ENCODE measurements at regions of chr19 and their contacts with region 1.

Region 1: GRCh38 chr19:43668406-43669158 is 1.4 kb downstream of the PLAUR start:
- DNase-seq: peak; percentile 82 to 98 (median 95)
- ATAC-seq: peak; percentile 90
- H3K4me3 ChIP-seq: peak overlapping the region; percentile 88
- H3K4me3 Mint-ChIP-seq: peak overlapping the region; percentile 84 to 93 (median 90)
- H3K27ac ChIP-seq: peak overlapping the region; percentile 58
- H3K27ac Mint-ChIP-seq: peak overlapping the region; percentile 71 to 91 (median 86)
- H3K4me1 ChIP-seq: peaks cover 16 to 27% of the 10 kb centered on the region in 2 donors
- H3K4me1 Mint-ChIP-seq: peaks cover 37 to 55% (median 45%) of the 10 kb centered on the region in 7 donors
- H3K27me3 ChIP-seq: no peaks in the 10 kb centered on the region
- H3K27me3 Mint-ChIP-seq: peaks cover 0 to 8% (median 0%) of the 10 kb centered on the region in 5 donors

Region 2: DNA sequence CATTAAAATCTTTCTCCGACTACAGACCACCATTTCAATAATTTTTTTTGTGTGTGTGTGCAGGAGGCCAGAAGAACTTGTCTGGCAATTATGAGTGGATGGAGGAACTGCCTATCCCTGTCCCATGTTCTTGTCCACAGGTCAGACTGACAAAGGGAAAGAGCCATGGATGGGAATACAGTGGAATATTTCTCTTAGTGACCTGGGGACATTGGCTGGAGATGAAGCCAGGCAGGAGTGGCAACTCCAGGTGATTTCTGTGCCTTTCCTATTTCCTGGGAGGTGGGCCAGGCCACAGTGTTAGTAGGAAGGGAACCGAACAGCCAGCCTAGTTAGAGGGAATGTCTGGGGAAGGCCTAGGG is 402.9 kb before region 1 on chr19:
- CTCF ChIA-PET with region 1: no interaction called
- POLR2A ChIA-PET with region 1: no interaction called
- intact Hi-C with region 1: no loop called
- DNase-seq: no peak
- ATAC-seq: no peak
- H3K4me3 ChIP-seq: no peak overlapping the region
- H3K4me3 Mint-ChIP-seq: no peak overlapping the region
- H3K27ac ChIP-seq: no peak overlapping the region
- H3K27ac Mint-ChIP-seq: no peak overlapping the region
- H3K4me1 ChIP-seq: no peaks in the 10 kb centered on the region
- H3K4me1 Mint-ChIP-seq: no peaks in the 10 kb centered on the region
- H3K27me3 ChIP-seq: no peaks in the 10 kb centered on the region
- H3K27me3 Mint-ChIP-seq: peaks cover 0 to 15% (median 12%) of the 10 kb centered on the region in 5 donors

Region 3: DNA sequence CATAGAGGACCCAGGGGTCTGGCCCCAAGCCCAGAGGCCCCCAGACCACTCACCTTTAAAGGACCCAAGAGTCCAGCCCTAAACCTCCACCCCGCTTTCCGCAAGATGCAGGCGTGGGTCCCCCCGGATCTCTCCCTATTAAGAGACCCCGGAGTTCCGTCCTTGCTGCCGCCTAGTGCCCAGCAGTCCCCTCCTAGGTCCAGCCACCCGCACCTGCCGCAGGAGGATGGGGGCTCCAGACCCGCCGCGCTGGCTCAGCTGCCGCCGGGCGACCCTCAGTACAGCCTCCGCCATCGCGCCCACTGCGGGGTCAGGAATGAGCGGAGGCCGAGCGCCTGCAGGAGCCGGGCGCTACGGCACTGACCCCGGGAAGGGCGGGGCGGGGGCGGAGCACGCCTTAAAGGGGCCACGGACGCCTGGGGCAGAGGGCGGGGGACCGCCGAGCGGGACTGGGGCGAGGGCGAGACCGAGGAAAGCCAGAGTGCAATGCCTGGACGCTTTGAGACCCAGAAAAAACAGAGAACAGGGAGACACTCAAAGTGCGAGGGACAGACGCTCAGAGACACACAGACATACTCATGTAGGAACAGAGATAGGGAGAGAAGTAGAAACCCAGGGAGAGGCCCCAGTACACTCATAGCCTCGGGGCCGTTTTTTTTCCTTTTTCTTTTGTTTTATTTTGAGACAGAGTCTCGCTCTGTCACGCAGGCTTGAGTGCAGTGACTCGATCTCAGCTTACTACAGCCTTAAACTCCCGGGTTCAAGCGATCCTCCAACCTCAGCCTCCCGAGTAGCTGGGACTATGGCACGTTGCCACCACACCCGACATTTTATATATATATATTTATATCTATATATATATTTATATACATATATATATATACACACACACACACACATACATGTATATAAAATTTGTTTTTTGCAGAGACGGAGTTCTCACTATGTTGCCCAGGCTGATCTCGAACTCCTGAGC is 141.4 kb before region 1 on chr19 and contains the start of gene ETHE1:
- CTCF ChIA-PET with region 1: no interaction called
- POLR2A ChIA-PET with region 1: interaction called, 3 read pairs
- intact Hi-C with region 1: loop called (anchors 2 to 5 kb)
- DNase-seq: peak; percentile 39 to 86 (median 50)
- ATAC-seq: peak; percentile 86
- H3K4me3 ChIP-seq: peak within 1 kb of the TSS; percentile 75
- H3K4me3 Mint-ChIP-seq: peak within 1 kb of the TSS; percentile 78 to 94 (median 84)
- H3K27ac ChIP-seq: peak within 1 kb of the TSS; percentile 81
- H3K27ac Mint-ChIP-seq: peak within 1 kb of the TSS; percentile 75 to 96 (median 86)
- H3K4me1 ChIP-seq: peaks cover 15 to 24% of the 10 kb centered on the region in 2 donors
- H3K4me1 Mint-ChIP-seq: peaks cover 18 to 38% (median 25%) of the 10 kb centered on the region in 7 donors
- H3K27me3 ChIP-seq: no peaks in the 10 kb centered on the region
- H3K27me3 Mint-ChIP-seq: no peaks in the 10 kb centered on the region
- total RNA-seq, gene ETHE1: 20.3 to 58.6 (median 23.9) TPM

Region 4: GRCh38 chr19:43619262-43620060 is 49.1 kb before region 1 on chr19 and contains the start of gene ZNF428:
- CTCF ChIA-PET with region 1: no interaction called
- POLR2A ChIA-PET with region 1: interaction called, 3 read pairs
- intact Hi-C with region 1: loop called (anchors 1 kb)
- DNase-seq: peak; percentile 77 to 91 (median 84)
- ATAC-seq: peak; percentile 93
- H3K4me3 ChIP-seq: peak within 1 kb of the TSS; percentile 63
- H3K4me3 Mint-ChIP-seq: peak within 1 kb of the TSS; percentile 95 to 99 (median 98)
- H3K27ac ChIP-seq: peak within 1 kb of the TSS; percentile 83
- H3K27ac Mint-ChIP-seq: peak within 1 kb of the TSS; percentile 93 to 99 (median 97)
- H3K4me1 ChIP-seq: peaks cover 9 to 12% of the 10 kb centered on the region in 2 donors
- H3K4me1 Mint-ChIP-seq: peaks cover 18 to 59% (median 36%) of the 10 kb centered on the region in 7 donors
- H3K27me3 ChIP-seq: no peaks in the 10 kb centered on the region
- H3K27me3 Mint-ChIP-seq: no peaks in the 10 kb centered on the region
- total RNA-seq, gene ZNF428: 21.7 to 29.1 (median 25.9) TPM

Region 5: GRCh38 chr19:43723588-43723987 is 55.0 kb after region 1 on chr19:
- CTCF ChIA-PET with region 1: no interaction called
- POLR2A ChIA-PET with region 1: interaction called, 4 read pairs
- intact Hi-C with region 1: loop called in 1 of 2 experiments (anchors 5 kb)
- DNase-seq: no peak
- ATAC-seq: no peak
- H3K4me3 ChIP-seq: no peak overlapping the region
- H3K4me3 Mint-ChIP-seq: no peak overlapping the region
- H3K27ac ChIP-seq: no peak overlapping the region
- H3K27ac Mint-ChIP-seq: no peak overlapping the region
- H3K4me1 ChIP-seq: no peaks in the 10 kb centered on the region
- H3K4me1 Mint-ChIP-seq: peaks cover 0 to 12% (median 6%) of the 10 kb centered on the region in 7 donors
- H3K27me3 ChIP-seq: no peaks in the 10 kb centered on the region
- H3K27me3 Mint-ChIP-seq: no peaks in the 10 kb centered on the region

Region 6: GRCh38 chr19:43784981-43785808 is 116.6 kb after region 1 on chr19:
- CTCF ChIA-PET with region 1: no interaction called
- POLR2A ChIA-PET with region 1: no interaction called
- intact Hi-C with region 1: loop called (anchors 1 kb)
- DNase-seq: peak in 8 of 9 donors; percentile 29 to 68 (median 56)
- ATAC-seq: peak; percentile 75
- H3K4me3 ChIP-seq: peak overlapping the region; percentile 12
- H3K4me3 Mint-ChIP-seq: peak overlapping the region; percentile 43 to 85 (median 70)
- H3K27ac ChIP-seq: peak overlapping the region; percentile 72
- H3K27ac Mint-ChIP-seq: peak overlapping the region; percentile 87 to 98 (median 95)
- H3K4me1 ChIP-seq: peaks cover 21 to 30% of the 10 kb centered on the region in 2 donors
- H3K4me1 Mint-ChIP-seq: peaks cover 27 to 49% (median 40%) of the 10 kb centered on the region in 7 donors
- H3K27me3 ChIP-seq: no peaks in the 10 kb centered on the region
- H3K27me3 Mint-ChIP-seq: peaks cover 0 to 6% (median 6%) of the 10 kb centered on the region in 5 donors

Measured in naive thymus-derived CD4-positive, alpha-beta T cell (primary cell).